Ascending aorta (tissue), 2 donors: ENCODE measurements at regions of chr6 and their contacts with region 1.

Region 1: DNA sequence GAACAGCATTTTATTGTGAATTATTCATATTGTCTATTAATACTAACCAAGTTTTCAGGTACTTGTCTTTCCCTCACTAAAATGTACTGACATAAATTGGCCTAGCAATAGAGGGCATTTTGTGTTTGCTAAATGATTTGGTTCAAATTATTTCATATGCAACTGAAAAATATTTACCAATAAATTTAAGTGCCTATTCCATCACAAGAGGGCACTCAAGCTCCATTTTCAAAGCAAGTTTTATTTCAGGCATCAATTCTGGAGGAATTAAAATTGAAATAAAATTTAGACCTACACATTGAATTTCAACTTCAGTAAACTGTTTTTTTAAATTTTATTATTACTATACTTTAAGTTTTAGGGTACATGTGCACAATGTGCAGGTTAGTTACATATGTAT is 114.3 kb upstream of the SYNCRIP start:
- DNase-seq: no peak
- H3K4me3 ChIP-seq: no peak overlapping the region
- H3K27ac ChIP-seq: no peak overlapping the region
- H3K4me1 ChIP-seq: no peaks in the 10 kb centered on the region
- H3K27me3 ChIP-seq: no peaks in the 10 kb centered on the region
- CTCF ChIP-seq: peak in 2 of 3 experiments; percentile 40 to 59

Region 2: GRCh38 chr6:85537055-85537494 is 219.9 kb before region 1 on chr6:
- intact Hi-C with region 1: no loop called
- DNase-seq: no peak
- H3K4me3 ChIP-seq: no peak overlapping the region
- H3K27ac ChIP-seq: peak overlapping the region in 1 of 2 donors; percentile 56
- H3K4me1 ChIP-seq: peaks cover 0 to 10% of the 10 kb centered on the region in 2 donors
- H3K27me3 ChIP-seq: no peaks in the 10 kb centered on the region
- CTCF ChIP-seq: peak; percentile 17 to 60 (median 58)

Region 3: GRCh38 chr6:85810558-85810957 is 53.6 kb after region 1 on chr6:
- intact Hi-C with region 1: no loop called
- DNase-seq: no peak
- H3K4me3 ChIP-seq: no peak overlapping the region
- H3K27ac ChIP-seq: no peak overlapping the region
- H3K4me1 ChIP-seq: no peaks in the 10 kb centered on the region
- H3K27me3 ChIP-seq: no peaks in the 10 kb centered on the region
- CTCF ChIP-seq: no peak

Region 4: DNA sequence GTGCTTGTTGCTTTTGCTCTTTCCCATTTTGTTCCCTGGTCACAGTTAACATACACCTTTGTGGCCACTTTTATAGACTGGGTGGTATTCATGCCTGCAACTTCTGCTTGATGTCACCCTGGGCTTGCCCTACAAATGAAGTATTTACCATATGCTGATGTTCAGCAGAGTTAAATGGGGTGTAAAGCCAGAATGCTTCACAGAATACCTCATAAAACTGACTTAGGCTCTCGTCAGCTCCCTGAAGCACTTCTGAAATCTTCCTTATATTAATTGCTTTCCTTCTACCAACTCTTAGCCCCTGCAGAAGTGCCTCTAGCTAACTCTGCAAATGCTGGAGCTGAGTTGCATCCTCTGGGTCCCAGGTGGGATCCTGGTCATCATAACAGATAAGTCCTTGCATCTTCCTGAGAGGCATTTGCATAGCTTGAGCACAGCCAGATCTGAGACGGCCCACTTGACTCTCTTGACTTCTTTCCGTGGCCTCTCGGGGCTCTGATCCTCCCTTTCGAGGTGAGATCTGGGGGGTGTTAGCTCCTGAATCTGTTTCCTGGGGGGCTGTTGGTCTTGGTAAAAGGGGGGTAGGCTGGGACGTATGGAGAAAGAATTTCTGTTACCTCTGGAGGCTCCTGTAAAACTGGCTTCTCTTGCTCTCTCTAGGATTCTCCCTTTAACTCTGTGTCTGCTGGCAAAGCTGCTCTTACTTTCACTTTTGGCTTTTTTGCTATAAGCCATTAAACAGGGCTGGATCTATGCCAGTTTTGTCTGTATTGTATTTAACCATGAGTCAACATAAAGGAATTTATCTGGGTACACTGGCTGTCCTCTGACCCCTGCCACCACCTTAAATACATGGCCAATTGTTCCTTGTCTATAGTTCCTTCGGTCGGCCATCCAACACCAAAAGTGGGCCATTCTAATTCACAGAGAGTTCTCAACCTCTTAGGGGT is 108.7 kb after region 1 on chr6:
- intact Hi-C with region 1: loop called (anchors 2 kb)
- DNase-seq: no peak
- H3K4me3 ChIP-seq: peak overlapping the region; percentile 45 to 68
- H3K27ac ChIP-seq: peak overlapping the region; percentile 82 to 85
- H3K4me1 ChIP-seq: peaks cover 0 to 19% of the 10 kb centered on the region in 2 donors
- H3K27me3 ChIP-seq: no peaks in the 10 kb centered on the region
- CTCF ChIP-seq: no peak

Region 5: GRCh38 chr6:86937219-86938079 is 1180.5 kb after region 1 on chr6 and contains the start of gene HTR1E:
- intact Hi-C with region 1: loop called (anchors 5 kb)
- DNase-seq: no peak
- H3K4me3 ChIP-seq: peak within 1 kb of the TSS; percentile 40 to 50
- H3K27ac ChIP-seq: no peak within 1 kb of the TSS
- H3K4me1 ChIP-seq: no peaks in the 10 kb centered on the region
- H3K27me3 ChIP-seq: no peaks in the 10 kb centered on the region
- CTCF ChIP-seq: peak in 2 of 3 experiments; percentile 32 to 42
- total RNA-seq, gene HTR1E: not detected